B cell (primary cell): ENCODE measurements at regions of chr2 and their contacts with region 1.

Region 1: DNA sequence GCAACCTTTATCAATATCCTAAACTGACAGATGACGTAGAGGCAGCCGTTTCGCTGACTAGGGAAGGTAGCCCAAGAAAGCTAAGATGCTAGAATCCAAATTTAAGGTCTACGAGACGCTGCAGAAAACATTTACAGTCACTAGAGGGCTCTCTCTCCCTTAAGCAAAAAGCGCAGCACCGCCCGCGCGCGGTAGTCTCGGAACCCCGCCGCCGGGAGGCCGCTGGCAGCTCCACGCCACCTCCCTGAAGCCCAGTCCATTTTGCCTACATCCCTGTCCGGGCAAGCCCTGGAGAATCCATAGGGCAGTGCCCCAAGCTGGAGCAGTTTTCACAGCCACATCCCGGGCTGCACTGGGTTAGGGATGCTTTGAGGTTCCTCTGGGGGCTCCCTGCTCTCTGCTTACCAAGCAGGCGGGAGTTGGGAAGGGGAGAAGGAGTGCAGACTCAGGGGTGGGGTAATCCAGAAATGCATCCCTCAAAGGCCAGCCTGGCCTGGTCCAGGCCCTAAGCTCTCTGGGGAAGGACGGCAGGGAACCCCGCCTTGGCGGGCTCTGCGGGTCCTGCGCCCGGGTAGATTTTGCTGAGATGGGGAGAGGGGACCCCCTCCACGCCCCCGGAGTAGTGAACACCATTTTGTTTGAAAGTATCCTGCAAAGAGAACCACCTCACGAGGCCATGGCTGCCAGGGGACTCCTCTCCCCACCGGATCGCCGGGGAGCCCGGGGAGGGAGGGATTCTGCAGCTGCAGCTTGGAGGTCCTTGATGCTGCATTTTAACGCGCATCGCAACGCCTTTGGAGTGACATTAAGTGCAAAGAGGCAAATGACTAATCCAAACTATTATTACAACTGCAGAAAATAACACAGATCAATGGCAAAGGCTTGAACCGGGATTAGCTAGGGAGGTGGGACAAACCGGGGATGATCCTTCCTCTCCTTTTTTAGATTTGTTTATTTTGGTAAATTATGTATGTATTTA is 1.3 kb upstream of the DPYSL5 start:
- DNase-seq: peak; percentile 81
- ATAC-seq: peak; percentile 76
- H3K4me3 ChIP-seq: no peak overlapping the region
- H3K4me3 Mint-ChIP-seq: peak overlapping the region; percentile 85
- H3K27ac ChIP-seq: no peak overlapping the region
- H3K27ac Mint-ChIP-seq: no peak overlapping the region
- H3K4me1 ChIP-seq: peaks cover 37% of the 10 kb centered on the region in 2 donors
- H3K4me1 Mint-ChIP-seq: peaks cover 18% of the 10 kb centered on the region
- H3K27me3 ChIP-seq: peaks cover 0 to 58% (median 49%) of the 10 kb centered on the region in 4 experiments
- H3K27me3 Mint-ChIP-seq: peaks cover 52% of the 10 kb centered on the region
- CTCF ChIP-seq: peak; percentile 83

Region 2: GRCh38 chr2:26861610-26862224 is 15.1 kb after region 1 on chr2:
- CTCF ChIA-PET with region 1: interaction called, 19 read pairs
- POLR2A ChIA-PET with region 1: no interaction called
- intact Hi-C with region 1: no loop called
- DNase-seq: no peak
- ATAC-seq: no peak
- H3K4me3 ChIP-seq: no peak overlapping the region
- H3K4me3 Mint-ChIP-seq: no peak overlapping the region
- H3K27ac ChIP-seq: no peak overlapping the region
- H3K27ac Mint-ChIP-seq: no peak overlapping the region
- H3K4me1 ChIP-seq: no peaks in the 10 kb centered on the region
- H3K4me1 Mint-ChIP-seq: no peaks in the 10 kb centered on the region
- H3K27me3 ChIP-seq: peaks cover 0 to 17% (median 5%) of the 10 kb centered on the region in 4 experiments
- H3K27me3 Mint-ChIP-seq: peaks cover 38% of the 10 kb centered on the region
- CTCF ChIP-seq: no peak

Region 3: GRCh38 chr2:26922405-26923188 is 76.0 kb after region 1 on chr2:
- CTCF ChIA-PET with region 1: interaction called, 50 read pairs
- POLR2A ChIA-PET with region 1: no interaction called
- intact Hi-C with region 1: no loop called
- DNase-seq: peak; percentile 57
- ATAC-seq: peak; percentile 56
- H3K4me3 ChIP-seq: no peak overlapping the region
- H3K4me3 Mint-ChIP-seq: no peak overlapping the region
- H3K27ac ChIP-seq: no peak overlapping the region
- H3K27ac Mint-ChIP-seq: no peak overlapping the region
- H3K4me1 ChIP-seq: peaks cover 0 to 4% of the 10 kb centered on the region in 2 donors
- H3K4me1 Mint-ChIP-seq: no peaks in the 10 kb centered on the region
- H3K27me3 ChIP-seq: peaks cover 0 to 15% (median 0%) of the 10 kb centered on the region in 4 experiments
- H3K27me3 Mint-ChIP-seq: peaks cover 31% of the 10 kb centered on the region
- CTCF ChIP-seq: peak; percentile 59

Region 4: GRCh38 chr2:26942543-26943295 is 96.1 kb after region 1 on chr2:
- CTCF ChIA-PET with region 1: interaction called, 78 read pairs
- POLR2A ChIA-PET with region 1: no interaction called
- intact Hi-C with region 1: loop called (anchors 1 kb)
- DNase-seq: peak; percentile 71
- ATAC-seq: peak; percentile 41
- H3K4me3 ChIP-seq: no peak overlapping the region
- H3K4me3 Mint-ChIP-seq: no peak overlapping the region
- H3K27ac ChIP-seq: no peak overlapping the region
- H3K27ac Mint-ChIP-seq: peak overlapping the region; percentile 37
- H3K4me1 ChIP-seq: no peaks in the 10 kb centered on the region
- H3K4me1 Mint-ChIP-seq: no peaks in the 10 kb centered on the region
- H3K27me3 ChIP-seq: peaks cover 0 to 13% (median 3%) of the 10 kb centered on the region in 4 experiments
- H3K27me3 Mint-ChIP-seq: peaks cover 25% of the 10 kb centered on the region
- CTCF ChIP-seq: peak; percentile 87

Region 5: GRCh38 chr2:27016801-27017325 is 170.2 kb after region 1 on chr2:
- CTCF ChIA-PET with region 1: interaction called, 25 read pairs
- POLR2A ChIA-PET with region 1: no interaction called
- intact Hi-C with region 1: no loop called
- DNase-seq: peak; percentile 63
- ATAC-seq: peak; percentile 57
- H3K4me3 ChIP-seq: no peak overlapping the region
- H3K4me3 Mint-ChIP-seq: no peak overlapping the region
- H3K27ac ChIP-seq: no peak overlapping the region
- H3K27ac Mint-ChIP-seq: no peak overlapping the region
- H3K4me1 ChIP-seq: no peaks in the 10 kb centered on the region
- H3K4me1 Mint-ChIP-seq: no peaks in the 10 kb centered on the region
- H3K27me3 ChIP-seq: no peaks in the 10 kb centered on the region
- H3K27me3 Mint-ChIP-seq: no peaks in the 10 kb centered on the region
- CTCF ChIP-seq: peak; percentile 71

Region 6: GRCh38 chr2:27303093-27304025 is 456.7 kb after region 1 on chr2:
- CTCF ChIA-PET with region 1: interaction called, 14 read pairs
- POLR2A ChIA-PET with region 1: no interaction called
- intact Hi-C with region 1: loop called (anchors 1 kb)
- DNase-seq: peak; percentile 70
- ATAC-seq: peak; percentile 74
- H3K4me3 ChIP-seq: peak overlapping the region in 4 of 5 experiments; percentile 7 to 38 (median 26)
- H3K4me3 Mint-ChIP-seq: peak overlapping the region; percentile 74
- H3K27ac ChIP-seq: peak overlapping the region in 1 of 2 donors; percentile 26
- H3K27ac Mint-ChIP-seq: peak overlapping the region; percentile 71
- H3K4me1 ChIP-seq: peaks cover 14 to 22% of the 10 kb centered on the region in 2 donors
- H3K4me1 Mint-ChIP-seq: peaks cover 11% of the 10 kb centered on the region
- H3K27me3 ChIP-seq: peaks cover 0 to 36% (median 10%) of the 10 kb centered on the region in 4 experiments
- H3K27me3 Mint-ChIP-seq: peaks cover 26% of the 10 kb centered on the region
- CTCF ChIP-seq: peak; percentile 96